CD4-positive, alpha-beta memory T cell (primary cell): ENCODE measurements at regions of chr12 and their contacts with region 1.

Region 1: GRCh38 chr12:12916135-12916944 is 25.0 kb downstream of the GPRC5A start:
- DNase-seq: peak; percentile 76 to 82 (median 80)
- H3K4me3 ChIP-seq: no peak overlapping the region
- H3K4me3 Mint-ChIP-seq: peak overlapping the region in 1 of 8 donors; percentile 0
- H3K27ac ChIP-seq: no peak overlapping the region
- H3K27ac Mint-ChIP-seq: peak overlapping the region in 3 of 7 donors; percentile 9 to 36 (median 14)
- H3K4me1 ChIP-seq: peaks cover 5% of the 10 kb centered on the region
- H3K4me1 Mint-ChIP-seq: peaks cover 5 to 8% (median 7%) of the 10 kb centered on the region in 4 donors
- H3K27me3 ChIP-seq: no peaks in the 10 kb centered on the region
- H3K27me3 Mint-ChIP-seq: peaks cover 4 to 9% of the 10 kb centered on the region in 2 donors

Region 2: DNA sequence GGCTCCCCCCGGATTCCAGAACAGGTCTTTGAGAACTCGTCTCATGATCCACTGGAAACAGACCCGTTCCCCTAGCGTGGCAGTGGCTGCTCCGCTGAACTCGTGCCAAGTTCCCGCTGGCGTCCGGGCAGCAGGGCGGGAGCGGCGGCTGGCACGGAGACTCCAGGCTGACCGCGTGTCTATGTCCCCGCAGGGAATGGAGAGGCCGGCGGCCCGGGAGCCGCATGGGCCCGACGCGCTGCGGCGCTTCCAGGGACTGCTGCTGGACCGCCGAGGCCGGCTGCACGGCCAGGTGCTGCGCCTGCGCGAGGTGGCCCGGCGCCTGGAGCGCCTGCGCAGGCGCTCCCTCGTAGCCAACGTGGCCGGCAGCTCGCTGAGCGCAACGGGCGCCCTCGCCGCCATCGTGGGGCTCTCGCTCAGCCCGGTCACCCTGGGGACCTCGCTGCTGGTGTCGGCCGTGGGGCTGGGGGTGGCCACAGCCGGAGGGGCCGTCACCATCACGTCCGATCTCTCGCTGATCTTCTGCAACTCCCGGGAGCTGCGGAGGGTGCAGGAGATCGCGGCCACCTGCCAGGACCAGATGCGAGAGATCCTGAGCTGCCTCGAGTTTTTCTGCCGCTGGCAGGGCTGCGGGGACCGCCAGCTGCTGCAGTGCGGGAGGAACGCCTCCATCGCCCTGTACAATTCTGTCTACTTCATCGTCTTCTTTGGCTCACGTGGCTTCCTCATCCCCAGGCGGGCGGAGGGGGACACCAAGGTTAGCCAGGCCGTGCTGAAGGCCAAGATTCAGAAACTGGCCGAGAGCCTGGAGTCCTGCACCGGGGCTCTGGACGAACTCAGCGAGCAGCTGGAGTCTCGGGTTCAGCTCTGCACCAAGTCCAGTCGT is 129.4 kb before region 1 on chr12:
- CTCF ChIA-PET with region 1: interaction called, 9 read pairs
- POLR2A ChIA-PET with region 1: no interaction called
- intact Hi-C with region 1: loop called (anchors 1 kb)
- DNase-seq: peak; percentile 73 to 78 (median 76)
- H3K4me3 ChIP-seq: peak overlapping the region; percentile 75 to 81
- H3K4me3 Mint-ChIP-seq: peak overlapping the region; percentile 80 to 92 (median 88)
- H3K27ac ChIP-seq: peak overlapping the region; percentile 65
- H3K27ac Mint-ChIP-seq: peak overlapping the region; percentile 48 to 90 (median 85)
- H3K4me1 ChIP-seq: peaks cover 27% of the 10 kb centered on the region
- H3K4me1 Mint-ChIP-seq: peaks cover 4 to 30% (median 10%) of the 10 kb centered on the region in 4 donors
- H3K27me3 ChIP-seq: no peaks in the 10 kb centered on the region
- H3K27me3 Mint-ChIP-seq: no peaks in the 10 kb centered on the region

Region 3: DNA sequence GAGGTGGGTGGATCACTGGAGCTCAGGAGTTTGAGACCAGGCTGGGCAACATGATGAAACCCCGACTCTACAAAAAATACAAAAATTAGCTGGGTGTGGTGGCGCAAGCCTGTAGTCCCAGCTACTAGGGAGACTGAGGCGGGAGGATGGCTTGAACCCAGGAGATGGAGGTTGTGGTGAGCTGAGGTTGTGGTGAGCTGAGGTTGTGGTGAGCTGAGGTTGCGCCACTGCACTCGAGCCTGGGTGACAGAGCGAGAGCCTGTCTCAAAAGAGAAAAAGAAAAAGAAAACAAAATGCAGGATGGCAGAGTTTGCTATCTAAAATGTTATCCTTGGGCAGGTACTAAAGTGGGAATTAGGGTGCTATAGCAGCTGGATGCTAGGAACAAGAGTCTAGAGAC is 35.8 kb before region 1 on chr12:
- CTCF ChIA-PET with region 1: no interaction called
- POLR2A ChIA-PET with region 1: no interaction called
- intact Hi-C with region 1: no loop called
- DNase-seq: no peak
- H3K4me3 ChIP-seq: no peak overlapping the region
- H3K4me3 Mint-ChIP-seq: no peak overlapping the region
- H3K27ac ChIP-seq: no peak overlapping the region
- H3K27ac Mint-ChIP-seq: no peak overlapping the region
- H3K4me1 ChIP-seq: no peaks in the 10 kb centered on the region
- H3K4me1 Mint-ChIP-seq: peaks cover 0 to 2% (median 0%) of the 10 kb centered on the region in 4 donors
- H3K27me3 ChIP-seq: no peaks in the 10 kb centered on the region
- H3K27me3 Mint-ChIP-seq: peaks cover 4 to 6% of the 10 kb centered on the region in 2 donors

Region 4: DNA sequence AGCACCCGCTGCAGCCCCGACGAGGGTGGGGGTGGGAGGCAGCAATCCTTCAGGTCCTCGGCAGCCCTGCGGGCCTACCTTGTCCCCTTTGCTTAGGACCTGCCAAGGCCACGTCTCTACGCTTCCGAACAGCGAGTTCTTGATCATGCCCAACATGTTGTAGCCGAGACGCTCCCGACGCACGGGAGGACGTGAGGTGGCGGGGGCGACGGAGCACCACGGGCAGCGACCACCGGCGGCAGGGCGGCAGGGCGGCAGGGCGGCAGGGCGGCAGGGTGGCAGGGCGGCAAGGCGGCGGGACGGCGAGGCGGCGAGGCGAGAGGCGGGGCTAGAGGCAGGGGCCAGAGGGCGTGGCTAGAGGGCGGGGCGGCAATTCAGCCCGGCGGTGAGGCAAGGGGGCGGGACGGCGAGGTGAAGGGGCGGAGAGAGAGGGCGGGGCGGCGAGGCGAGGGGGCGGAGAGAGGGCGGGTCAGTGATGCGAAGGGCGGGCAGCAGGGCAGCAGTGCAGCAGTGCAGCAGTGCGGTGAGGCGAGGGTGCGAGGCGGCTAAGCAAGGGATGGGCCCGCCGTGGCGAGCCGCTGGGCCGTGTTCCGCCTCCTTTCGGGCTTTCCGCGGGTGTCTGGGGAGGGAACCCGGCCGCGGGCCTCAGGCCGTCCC is 83.7 kb after region 1 on chr12 and contains the start of gene HEBP1:
- CTCF ChIA-PET with region 1: no interaction called
- POLR2A ChIA-PET with region 1: no interaction called
- intact Hi-C with region 1: loop called (anchors 5 kb)
- DNase-seq: peak; percentile 92 to 95 (median 93)
- H3K4me3 ChIP-seq: peak within 1 kb of the TSS; percentile 61 to 81
- H3K4me3 Mint-ChIP-seq: peak within 1 kb of the TSS; percentile 82 to 97 (median 90)
- H3K27ac ChIP-seq: peak within 1 kb of the TSS; percentile 64
- H3K27ac Mint-ChIP-seq: peak within 1 kb of the TSS; percentile 82 to 95 (median 90)
- H3K4me1 ChIP-seq: peaks cover 26% of the 10 kb centered on the region
- H3K4me1 Mint-ChIP-seq: peaks cover 20 to 44% (median 30%) of the 10 kb centered on the region in 4 donors
- H3K27me3 ChIP-seq: no peaks in the 10 kb centered on the region
- H3K27me3 Mint-ChIP-seq: no peaks in the 10 kb centered on the region
- total RNA-seq, gene HEBP1: 11.3 to 13.9 TPM

Region 5: GRCh38 chr12:13094347-13094746 is 178.0 kb after region 1 on chr12:
- CTCF ChIA-PET with region 1: interaction called, 22 read pairs
- POLR2A ChIA-PET with region 1: interaction called, 3 read pairs
- intact Hi-C with region 1: loop called (anchors 1 kb)
- DNase-seq: no peak
- H3K4me3 ChIP-seq: no peak overlapping the region
- H3K4me3 Mint-ChIP-seq: no peak overlapping the region
- H3K27ac ChIP-seq: no peak overlapping the region
- H3K27ac Mint-ChIP-seq: no peak overlapping the region
- H3K4me1 ChIP-seq: peaks cover 19% of the 10 kb centered on the region
- H3K4me1 Mint-ChIP-seq: peaks cover 10 to 18% (median 15%) of the 10 kb centered on the region in 4 donors
- H3K27me3 ChIP-seq: no peaks in the 10 kb centered on the region
- H3K27me3 Mint-ChIP-seq: peaks cover 0 to 6% of the 10 kb centered on the region in 2 donors

Region 6: DNA sequence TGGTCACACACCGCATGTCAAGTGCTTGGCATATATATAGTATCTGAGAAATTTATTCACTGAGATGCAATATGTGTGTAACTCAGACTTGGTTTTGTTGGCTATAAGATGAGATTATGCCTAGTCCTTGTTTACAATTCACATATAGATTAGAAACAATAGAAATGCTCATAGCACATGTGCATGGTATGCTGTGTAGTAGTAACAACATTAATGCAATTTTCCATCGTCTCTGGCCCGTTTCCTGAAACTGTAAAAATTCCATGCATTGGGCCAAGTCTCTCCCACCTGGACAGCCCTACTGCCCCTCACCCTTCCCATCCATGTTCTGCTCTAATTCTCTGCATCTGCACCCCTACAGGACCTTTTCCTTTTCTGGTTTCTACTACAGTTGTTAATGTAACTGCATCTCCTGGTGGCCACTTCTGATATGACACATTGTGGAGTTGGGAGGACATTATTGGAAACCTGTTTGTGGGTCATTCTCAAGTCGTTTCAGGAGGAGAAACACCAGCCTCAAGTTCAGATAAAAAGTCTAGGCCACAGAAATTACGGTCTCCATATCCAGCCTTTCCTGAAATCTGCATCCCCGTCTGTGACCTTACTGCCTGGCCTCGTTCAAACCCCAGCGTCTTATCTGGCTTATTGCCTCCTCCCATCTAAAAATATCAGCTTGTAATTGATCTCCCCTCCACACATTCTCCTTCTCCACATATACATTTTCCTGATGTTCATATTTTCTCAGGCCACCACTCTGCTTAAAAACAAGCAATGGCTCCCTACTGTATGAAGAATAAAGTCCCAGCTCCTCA is 317.7 kb after region 1 on chr12:
- CTCF ChIA-PET with region 1: interaction called, 22 read pairs
- POLR2A ChIA-PET with region 1: no interaction called
- intact Hi-C with region 1: loop called (anchors 1 kb)
- DNase-seq: peak; percentile 21 to 40 (median 27)
- H3K4me3 ChIP-seq: no peak overlapping the region
- H3K4me3 Mint-ChIP-seq: no peak overlapping the region
- H3K27ac ChIP-seq: no peak overlapping the region
- H3K27ac Mint-ChIP-seq: peak overlapping the region in 1 of 7 donors; percentile 63
- H3K4me1 ChIP-seq: no peaks in the 10 kb centered on the region
- H3K4me1 Mint-ChIP-seq: no peaks in the 10 kb centered on the region
- H3K27me3 ChIP-seq: no peaks in the 10 kb centered on the region
- H3K27me3 Mint-ChIP-seq: peaks cover 14 to 16% of the 10 kb centered on the region in 2 donors

Region 7: GRCh38 chr12:13278249-13278787 is 362.0 kb after region 1 on chr12:
- CTCF ChIA-PET with region 1: no interaction called
- POLR2A ChIA-PET with region 1: no interaction called
- intact Hi-C with region 1: loop called (anchors 1 kb)
- DNase-seq: peak in 4 of 5 donors; percentile 40 to 50 (median 43)
- H3K4me3 ChIP-seq: no peak overlapping the region
- H3K4me3 Mint-ChIP-seq: peak overlapping the region in 2 of 8 donors; percentile 32 to 57
- H3K27ac ChIP-seq: no peak overlapping the region
- H3K27ac Mint-ChIP-seq: no peak overlapping the region
- H3K4me1 ChIP-seq: peaks cover 4% of the 10 kb centered on the region
- H3K4me1 Mint-ChIP-seq: peaks cover 0 to 7% (median 5%) of the 10 kb centered on the region in 4 donors
- H3K27me3 ChIP-seq: peaks cover 10% of the 10 kb centered on the region
- H3K27me3 Mint-ChIP-seq: peaks cover 30 to 35% of the 10 kb centered on the region in 2 donors